PC-3 (cell line): ENCODE measurements at regions of chr19 and their contacts with region 1.

Region 1: GRCh38 chr19:53977429-53977990 is 13.9 kb upstream of the CACNG6 start:
- DNase-seq: peak; percentile 91
- ATAC-seq: peak; percentile 12
- H3K4me3 ChIP-seq: 0 out of 2 replicates have a peak overlapping the region, but pooled peaks have one; percentile 12
- H3K27ac ChIP-seq: no peak overlapping the region
- H3K4me1 ChIP-seq: peaks cover 24% of the 10 kb centered on the region
- H3K27me3 ChIP-seq: no peaks in the 10 kb centered on the region
- CTCF ChIP-seq: no peak

Region 2: DNA sequence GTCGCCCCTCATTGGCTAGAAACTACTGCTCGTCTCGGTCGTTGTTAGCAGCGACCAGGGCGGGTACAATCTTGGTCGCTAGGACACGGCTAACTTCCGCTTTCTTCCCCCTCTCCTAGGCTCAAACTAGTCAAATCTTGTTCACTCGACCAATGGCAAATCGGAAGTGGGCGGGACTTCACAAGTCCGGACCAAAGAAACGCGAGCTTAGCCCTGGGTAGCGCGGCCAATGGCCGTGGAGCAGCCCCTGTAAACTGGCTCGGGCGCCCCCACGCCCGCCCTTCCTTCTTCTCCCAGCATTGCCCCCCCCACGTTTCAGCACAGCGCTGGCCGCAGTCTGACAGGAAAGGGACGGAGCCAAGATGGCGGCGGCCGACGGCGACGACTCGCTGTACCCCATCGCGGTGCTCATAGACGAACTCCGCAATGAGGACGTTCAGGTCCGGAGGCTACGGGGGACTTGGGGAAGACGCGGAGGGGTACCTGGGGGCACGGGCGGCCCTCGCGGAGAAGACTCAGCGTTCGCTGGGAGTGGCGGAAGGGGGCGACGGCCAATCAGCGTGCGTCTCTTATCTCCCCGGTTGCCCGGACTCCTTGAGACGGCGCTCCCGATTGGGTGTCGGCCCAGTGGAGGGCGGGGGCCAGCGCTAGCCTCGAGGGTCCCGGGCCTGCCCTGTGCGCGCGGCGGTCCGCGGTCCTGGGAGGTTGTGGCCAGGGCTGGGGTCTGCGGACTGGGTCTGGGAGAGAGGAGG is 1787.6 kb before region 1 on chr19 and contains the start of gene PPP2R1A:
- CTCF ChIA-PET with region 1: no interaction called
- POLR2A ChIA-PET with region 1: interaction called, 68 read pairs
- intact Hi-C with region 1: no loop called
- DNase-seq: peak; percentile 100
- ATAC-seq: peak; percentile 91
- H3K4me3 ChIP-seq: peak within 1 kb of the TSS; percentile 86
- H3K27ac ChIP-seq: peak within 1 kb of the TSS; percentile 86
- H3K4me1 ChIP-seq: peaks cover 18% of the 10 kb centered on the region
- H3K27me3 ChIP-seq: no peaks in the 10 kb centered on the region
- CTCF ChIP-seq: no peak
- total RNA-seq, gene PPP2R1A: 336 and 427 TPM in 2 replicates

Region 3: GRCh38 chr19:53808710-53809125 is 168.8 kb before region 1 on chr19:
- CTCF ChIA-PET with region 1: no interaction called
- POLR2A ChIA-PET with region 1: no interaction called
- intact Hi-C with region 1: no loop called
- DNase-seq: peak; percentile 76
- ATAC-seq: peak; percentile 91
- H3K4me3 ChIP-seq: no peak overlapping the region
- H3K27ac ChIP-seq: no peak overlapping the region
- H3K4me1 ChIP-seq: no peaks in the 10 kb centered on the region
- H3K27me3 ChIP-seq: no peaks in the 10 kb centered on the region
- CTCF ChIP-seq: peak; percentile 87

Region 4: GRCh38 chr19:53824134-53824611 is 153.3 kb before region 1 on chr19 and contains the start of gene NLRP12:
- CTCF ChIA-PET with region 1: no interaction called
- POLR2A ChIA-PET with region 1: no interaction called
- intact Hi-C with region 1: no loop called
- DNase-seq: no peak
- ATAC-seq: no peak
- H3K4me3 ChIP-seq: no peak within 1 kb of the TSS
- H3K27ac ChIP-seq: no peak within 1 kb of the TSS
- H3K4me1 ChIP-seq: no peaks in the 10 kb centered on the region
- H3K27me3 ChIP-seq: no peaks in the 10 kb centered on the region
- CTCF ChIP-seq: no peak
- total RNA-seq, gene NLRP12: 0.12 TPM in 1 of 2 replicates, not detected in the other

Region 5: GRCh38 chr19:53906211-53907192 is 71.0 kb before region 1 on chr19:
- CTCF ChIA-PET with region 1: no interaction called
- POLR2A ChIA-PET with region 1: no interaction called
- intact Hi-C with region 1: loop called (anchors 10 kb)
- DNase-seq: peak; percentile 39
- ATAC-seq: peak; percentile 42
- H3K4me3 ChIP-seq: no peak overlapping the region
- H3K27ac ChIP-seq: no peak overlapping the region
- H3K4me1 ChIP-seq: peaks cover 17% of the 10 kb centered on the region
- H3K27me3 ChIP-seq: peaks cover 49% of the 10 kb centered on the region
- CTCF ChIP-seq: peak; percentile 96

Region 6: GRCh38 chr19:54023191-54023590 is 45.7 kb after region 1 on chr19:
- CTCF ChIA-PET with region 1: interaction called, 7 read pairs
- POLR2A ChIA-PET with region 1: interaction called, 3 read pairs
- intact Hi-C with region 1: loop called (anchors 1 kb)
- DNase-seq: no peak
- ATAC-seq: no peak
- H3K4me3 ChIP-seq: no peak overlapping the region
- H3K27ac ChIP-seq: peak overlapping the region; percentile 80; the same call in 1 of the 2 replicates
- H3K4me1 ChIP-seq: peaks cover 42% of the 10 kb centered on the region
- H3K27me3 ChIP-seq: no peaks in the 10 kb centered on the region
- CTCF ChIP-seq: no peak

Region 7: DNA sequence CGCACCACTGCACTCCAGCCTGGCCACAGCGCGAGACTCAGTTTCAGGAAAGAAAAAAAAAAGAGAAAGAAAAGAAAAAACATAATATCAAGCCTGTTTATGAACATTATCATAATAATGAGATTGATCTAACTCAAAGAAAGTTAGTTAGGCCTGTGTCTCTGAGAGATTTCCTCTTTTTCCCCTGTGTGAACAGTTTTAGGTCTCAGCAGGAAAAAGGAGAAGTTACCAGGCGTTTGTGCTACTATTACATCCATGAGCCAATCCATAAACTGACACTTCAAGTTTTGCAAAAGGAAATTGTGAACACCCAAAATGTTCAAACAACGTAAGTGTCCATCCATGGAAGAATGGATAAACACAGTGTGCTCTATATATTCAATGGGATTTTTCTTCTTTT is 99.8 kb after region 1 on chr19:
- CTCF ChIA-PET with region 1: no interaction called
- POLR2A ChIA-PET with region 1: no interaction called
- intact Hi-C with region 1: no loop called
- DNase-seq: no peak
- ATAC-seq: no peak
- H3K4me3 ChIP-seq: no peak overlapping the region
- H3K27ac ChIP-seq: no peak overlapping the region
- H3K4me1 ChIP-seq: no peaks in the 10 kb centered on the region
- H3K27me3 ChIP-seq: no peaks in the 10 kb centered on the region
- CTCF ChIP-seq: no peak

Region 8: DNA sequence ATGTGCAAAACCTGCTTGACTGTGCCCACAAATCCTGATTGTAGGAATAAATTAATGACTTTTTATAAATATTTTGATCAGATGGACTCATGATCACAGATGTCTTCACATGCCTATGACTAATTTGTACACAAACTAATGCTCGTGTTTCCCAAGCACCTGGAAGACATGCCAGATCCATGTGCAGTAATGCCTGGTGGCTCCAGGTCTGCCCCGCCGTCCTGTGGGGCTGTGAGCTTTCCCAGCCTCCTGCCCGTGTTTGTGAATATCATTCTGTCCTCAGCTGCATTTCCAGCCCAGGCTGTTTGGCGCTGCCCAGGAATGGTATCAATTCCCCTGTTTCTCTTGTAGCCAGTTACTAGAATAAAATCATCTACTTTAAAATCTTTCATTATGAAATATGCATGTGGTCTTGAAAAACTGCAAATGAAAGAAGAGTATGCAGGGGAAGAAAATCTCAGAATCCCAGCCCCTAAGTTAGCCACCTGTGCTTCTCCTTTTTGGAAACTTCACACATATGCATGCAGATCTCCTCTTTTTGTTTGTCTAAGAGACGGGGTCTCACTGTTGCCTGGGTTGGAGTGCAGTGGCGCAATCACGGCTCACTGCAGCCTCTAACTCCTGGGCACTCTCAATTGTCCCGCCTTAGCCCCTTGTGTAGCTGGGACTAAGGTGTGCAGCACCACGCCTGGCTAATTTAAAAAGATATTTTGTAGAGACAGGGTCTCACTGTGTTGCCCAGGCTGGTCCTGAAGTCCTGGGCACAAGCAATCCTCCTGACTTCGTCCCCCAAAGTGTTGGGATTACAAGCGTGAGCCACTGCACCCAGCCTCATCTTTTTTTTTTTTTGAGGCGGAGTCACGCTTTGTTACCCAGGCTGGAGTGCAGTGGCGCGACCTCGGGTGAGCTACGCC is 1414.4 kb after region 1 on chr19:
- CTCF ChIA-PET with region 1: no interaction called
- POLR2A ChIA-PET with region 1: interaction called, 11 read pairs
- intact Hi-C with region 1: no loop called
- DNase-seq: peak; percentile 46
- ATAC-seq: peak; percentile 33
- H3K4me3 ChIP-seq: no peak overlapping the region
- H3K27ac ChIP-seq: no peak overlapping the region
- H3K4me1 ChIP-seq: peaks cover 17% of the 10 kb centered on the region
- H3K27me3 ChIP-seq: no peaks in the 10 kb centered on the region
- CTCF ChIP-seq: no peak